Activated CD4-positive, alpha-beta memory T cell treated with anti-CD3 and anti-CD28 coated beads for 36 hours (primary cell): ENCODE measurements at regions of chrX and their contacts with region 1.

Region 1: GRCh38 chrX:74343343-74344279 is 39.6 kb downstream of the ZCCHC13 start:
- DNase-seq: peak; percentile 41
- H3K4me3 Mint-ChIP-seq: no peak overlapping the region
- H3K27ac Mint-ChIP-seq: no peak overlapping the region
- H3K4me1 Mint-ChIP-seq: peaks cover 3% of the 10 kb centered on the region
- H3K27me3 Mint-ChIP-seq: no peaks in the 10 kb centered on the region

Region 2: GRCh38 chrX:73855546-73855945 is 488.1 kb before region 1 on chrX:
- CTCF ChIA-PET with region 1: no interaction called
- POLR2A ChIA-PET with region 1: no interaction called
- intact Hi-C with region 1: loop called (anchors 1 kb)
- DNase-seq: peak; percentile 66
- H3K4me3 Mint-ChIP-seq: no peak overlapping the region
- H3K27ac Mint-ChIP-seq: no peak overlapping the region
- H3K4me1 Mint-ChIP-seq: no peaks in the 10 kb centered on the region
- H3K27me3 Mint-ChIP-seq: no peaks in the 10 kb centered on the region

Region 3: GRCh38 chrX:74015379-74016019 is 328.1 kb before region 1 on chrX:
- CTCF ChIA-PET with region 1: no interaction called
- POLR2A ChIA-PET with region 1: no interaction called
- intact Hi-C with region 1: loop called (anchors 5 kb)
- DNase-seq: peak; percentile 60
- H3K4me3 Mint-ChIP-seq: no peak overlapping the region
- H3K27ac Mint-ChIP-seq: no peak overlapping the region
- H3K4me1 Mint-ChIP-seq: no peaks in the 10 kb centered on the region
- H3K27me3 Mint-ChIP-seq: no peaks in the 10 kb centered on the region

Region 4: DNA sequence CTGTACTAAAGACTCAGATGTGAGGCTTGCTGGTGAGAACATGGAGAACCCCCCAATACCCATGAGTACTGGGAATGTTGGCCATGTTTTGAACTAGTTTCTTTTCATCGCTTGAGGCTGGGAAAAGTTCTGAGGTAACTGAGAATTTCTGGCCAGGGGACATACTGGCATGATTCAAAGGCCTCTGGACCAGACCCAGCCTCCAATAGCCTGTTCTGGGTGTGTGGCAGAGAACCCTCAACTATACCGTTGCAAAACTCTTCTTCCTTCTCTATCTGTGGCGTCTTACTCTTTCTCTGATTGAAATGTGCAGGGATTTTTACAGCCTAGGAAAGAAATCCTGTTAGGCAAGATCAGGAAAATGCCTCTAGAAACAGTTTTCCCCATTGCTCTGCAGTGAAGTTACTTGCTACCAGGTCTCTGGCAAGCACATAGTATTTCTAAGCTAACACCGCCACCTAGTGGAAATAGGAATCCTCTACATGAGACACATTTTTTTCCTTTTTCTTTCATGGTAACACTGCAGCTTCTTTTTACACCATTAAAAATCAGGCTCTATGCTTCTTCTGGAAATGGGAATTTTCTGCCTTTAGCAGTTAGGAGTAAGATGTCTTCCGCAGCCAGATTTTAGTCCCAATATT is 210.3 kb before region 1 on chrX:
- CTCF ChIA-PET with region 1: no interaction called
- POLR2A ChIA-PET with region 1: no interaction called
- intact Hi-C with region 1: loop called (anchors 5 kb)
- DNase-seq: no peak
- H3K4me3 Mint-ChIP-seq: no peak overlapping the region
- H3K27ac Mint-ChIP-seq: no peak overlapping the region
- H3K4me1 Mint-ChIP-seq: no peaks in the 10 kb centered on the region
- H3K27me3 Mint-ChIP-seq: no peaks in the 10 kb centered on the region

Region 5: GRCh38 chrX:74218895-74219294 is 124.7 kb before region 1 on chrX:
- CTCF ChIA-PET with region 1: no interaction called
- POLR2A ChIA-PET with region 1: no interaction called
- intact Hi-C with region 1: loop called (anchors 10 kb)
- DNase-seq: no peak
- H3K4me3 Mint-ChIP-seq: no peak overlapping the region
- H3K27ac Mint-ChIP-seq: no peak overlapping the region
- H3K4me1 Mint-ChIP-seq: peaks cover 32% of the 10 kb centered on the region
- H3K27me3 Mint-ChIP-seq: no peaks in the 10 kb centered on the region

Region 6: DNA sequence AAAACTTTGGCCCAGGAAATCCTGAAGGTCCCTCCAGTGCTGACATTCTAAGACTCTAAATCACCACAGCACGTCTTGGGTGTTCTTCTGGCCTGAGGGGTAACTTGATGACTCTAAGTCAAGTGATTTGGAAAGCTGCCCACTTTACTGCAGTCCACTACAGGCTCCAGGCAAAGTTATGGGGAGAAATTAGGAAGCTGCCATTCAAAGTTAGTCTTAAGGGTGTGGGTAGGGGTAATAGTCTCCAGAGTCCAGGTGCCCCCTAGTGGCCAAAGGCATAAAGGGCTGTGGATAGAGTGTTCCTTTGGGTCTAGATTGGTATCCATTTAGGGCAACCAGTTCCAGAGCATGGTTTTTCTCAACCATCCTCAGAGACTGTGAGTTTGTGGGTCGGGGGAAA is 39.0 kb after region 1 on chrX:
- CTCF ChIA-PET with region 1: interaction called, 9 read pairs
- POLR2A ChIA-PET with region 1: no interaction called
- intact Hi-C with region 1: loop called (anchors 2 kb)
- DNase-seq: peak; percentile 68
- H3K4me3 Mint-ChIP-seq: no peak overlapping the region
- H3K27ac Mint-ChIP-seq: no peak overlapping the region
- H3K4me1 Mint-ChIP-seq: no peaks in the 10 kb centered on the region
- H3K27me3 Mint-ChIP-seq: no peaks in the 10 kb centered on the region

Region 7: GRCh38 chrX:74550295-74550802 is 206.7 kb after region 1 on chrX:
- CTCF ChIA-PET with region 1: no interaction called
- POLR2A ChIA-PET with region 1: no interaction called
- intact Hi-C with region 1: loop called (anchors 2 kb)
- DNase-seq: peak; percentile 86
- H3K4me3 Mint-ChIP-seq: no peak overlapping the region
- H3K27ac Mint-ChIP-seq: no peak overlapping the region
- H3K4me1 Mint-ChIP-seq: peaks cover 3% of the 10 kb centered on the region
- H3K27me3 Mint-ChIP-seq: no peaks in the 10 kb centered on the region